ENCODE measurements at regions of chr19 and their contacts with region 1.

Region 1: DNA sequence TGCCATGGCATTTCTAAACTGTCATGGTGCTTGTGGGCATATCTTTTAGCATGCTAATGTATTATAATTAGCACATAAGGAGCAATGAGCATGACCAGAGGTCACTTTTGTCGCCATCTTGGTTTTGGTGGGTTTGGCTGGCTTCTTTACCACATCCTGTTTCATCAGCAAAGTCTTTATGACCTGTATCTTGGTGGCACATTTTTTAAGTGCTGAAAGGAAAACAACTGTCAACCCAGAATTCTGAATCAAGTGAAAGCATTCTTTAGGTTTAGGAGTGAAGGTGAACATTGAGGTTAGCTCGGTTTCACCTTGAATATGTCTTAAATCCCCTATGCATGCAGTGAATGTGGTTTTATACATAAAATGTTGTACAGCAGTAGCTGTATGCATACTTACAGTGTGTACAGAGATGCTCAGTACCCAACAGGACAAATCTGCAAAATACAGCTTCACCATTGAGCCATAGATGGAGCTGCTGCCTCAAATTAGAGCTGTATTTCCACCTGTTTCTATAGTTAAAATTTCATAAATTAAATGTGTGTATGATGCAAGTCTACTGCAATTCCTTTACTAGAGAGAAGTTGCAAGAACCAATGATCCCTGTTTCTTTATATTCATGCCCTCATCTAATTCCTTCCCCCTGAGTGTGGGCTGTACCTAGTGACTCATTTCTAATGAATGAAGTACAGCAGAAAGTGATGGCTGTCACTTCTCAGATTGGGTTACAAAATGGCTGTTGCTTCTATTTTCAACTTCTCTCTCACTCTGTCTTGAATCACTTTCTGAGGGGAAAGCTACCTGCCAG is 25.2 kb upstream of the IGSF23 start:
- DNase-seq: peak; percentile 86
- ATAC-seq: peak; percentile 86
- H3K4me3 ChIP-seq: peak overlapping the region; percentile 58
- H3K27ac ChIP-seq: peak overlapping the region; percentile 90
- H3K4me1 ChIP-seq: peaks cover 38% of the 10 kb centered on the region
- H3K27me3 ChIP-seq: no peaks in the 10 kb centered on the region
- CTCF ChIP-seq: peak; percentile 46

Region 2: DNA sequence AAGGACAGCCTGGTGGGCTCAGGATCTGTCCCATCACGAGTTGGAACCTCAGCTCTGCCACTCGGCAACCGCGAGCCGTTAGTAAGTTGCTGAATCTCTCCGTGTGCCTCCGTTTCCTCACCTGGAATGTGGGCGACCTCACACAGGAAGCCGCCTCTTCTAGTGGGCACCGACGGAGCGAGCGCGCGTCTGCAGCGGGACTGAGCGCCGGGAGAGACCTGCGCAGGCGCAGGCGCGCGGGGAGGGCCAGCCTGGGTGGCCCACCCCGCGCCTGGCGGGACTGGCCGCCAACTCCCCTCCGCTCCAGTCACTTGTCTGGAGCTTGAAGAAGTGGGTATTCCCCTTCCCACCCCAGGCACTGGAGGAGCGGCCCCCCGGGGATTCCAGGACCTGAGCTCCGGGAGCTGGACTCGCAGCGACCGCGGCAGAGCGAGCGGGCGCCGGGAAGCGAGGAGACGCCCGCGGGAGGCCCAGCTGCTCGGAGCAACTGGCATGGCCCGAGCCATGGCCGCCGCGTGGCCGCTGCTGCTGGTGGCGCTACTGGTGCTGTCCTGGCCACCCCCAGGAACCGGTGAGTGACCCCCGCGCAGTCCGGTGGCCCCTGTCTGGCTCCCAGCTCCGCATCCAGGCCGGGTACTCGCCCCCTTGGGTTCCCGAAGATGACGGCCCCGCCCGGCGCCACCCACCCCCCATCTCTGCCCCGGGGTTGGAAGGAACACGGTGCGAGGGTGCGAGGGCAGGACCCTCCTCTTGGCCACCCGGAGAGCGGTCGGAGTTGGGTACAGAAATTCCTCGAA is 55.6 kb after region 1 on chr19 and contains the start of gene PVR:
- CTCF ChIA-PET with region 1: interaction called, 3 read pairs
- POLR2A ChIA-PET with region 1: interaction called, 18 read pairs
- intact Hi-C with region 1: loop called (anchors 5 kb)
- DNase-seq: peak; percentile 77
- ATAC-seq: peak; percentile 83
- H3K4me3 ChIP-seq: peak within 1 kb of the TSS; percentile 89
- H3K27ac ChIP-seq: peak within 1 kb of the TSS; percentile 78
- H3K4me1 ChIP-seq: peaks cover 36% of the 10 kb centered on the region
- H3K27me3 ChIP-seq: no peaks in the 10 kb centered on the region
- CTCF ChIP-seq: no peak
- total RNA-seq, gene PVR: 67.8 and 75.3 TPM in 2 replicates

Region 3: GRCh38 chr19:44653977-44654774 is 66.0 kb after region 1 on chr19:
- CTCF ChIA-PET with region 1: interaction called, 9 read pairs
- POLR2A ChIA-PET with region 1: interaction called, 4 read pairs
- intact Hi-C with region 1: loop called (anchors 1 kb)
- DNase-seq: peak; percentile 48
- ATAC-seq: peak; percentile 75
- H3K4me3 ChIP-seq: no peak overlapping the region
- H3K27ac ChIP-seq: no peak overlapping the region
- H3K4me1 ChIP-seq: peaks cover under 1% of the 10 kb centered on the region; the same call in 1 of the 2 replicates
- H3K27me3 ChIP-seq: no peaks in the 10 kb centered on the region
- CTCF ChIP-seq: peak; percentile 57

Region 4: GRCh38 chr19:44723952-44724319 is 135.8 kb after region 1 on chr19:
- CTCF ChIA-PET with region 1: interaction called, 5 read pairs
- POLR2A ChIA-PET with region 1: no interaction called
- intact Hi-C with region 1: loop called (anchors 5 kb)
- DNase-seq: peak; percentile 86
- ATAC-seq: peak; percentile 84
- H3K4me3 ChIP-seq: no peak overlapping the region
- H3K27ac ChIP-seq: peak overlapping the region; percentile 76
- H3K4me1 ChIP-seq: peaks cover 28% of the 10 kb centered on the region
- H3K27me3 ChIP-seq: no peaks in the 10 kb centered on the region
- CTCF ChIP-seq: peak; percentile 89